Heart right ventricle (tissue), 16 donors: ENCODE measurements at regions of chr5 and their contacts with region 1.

Region 1: DNA sequence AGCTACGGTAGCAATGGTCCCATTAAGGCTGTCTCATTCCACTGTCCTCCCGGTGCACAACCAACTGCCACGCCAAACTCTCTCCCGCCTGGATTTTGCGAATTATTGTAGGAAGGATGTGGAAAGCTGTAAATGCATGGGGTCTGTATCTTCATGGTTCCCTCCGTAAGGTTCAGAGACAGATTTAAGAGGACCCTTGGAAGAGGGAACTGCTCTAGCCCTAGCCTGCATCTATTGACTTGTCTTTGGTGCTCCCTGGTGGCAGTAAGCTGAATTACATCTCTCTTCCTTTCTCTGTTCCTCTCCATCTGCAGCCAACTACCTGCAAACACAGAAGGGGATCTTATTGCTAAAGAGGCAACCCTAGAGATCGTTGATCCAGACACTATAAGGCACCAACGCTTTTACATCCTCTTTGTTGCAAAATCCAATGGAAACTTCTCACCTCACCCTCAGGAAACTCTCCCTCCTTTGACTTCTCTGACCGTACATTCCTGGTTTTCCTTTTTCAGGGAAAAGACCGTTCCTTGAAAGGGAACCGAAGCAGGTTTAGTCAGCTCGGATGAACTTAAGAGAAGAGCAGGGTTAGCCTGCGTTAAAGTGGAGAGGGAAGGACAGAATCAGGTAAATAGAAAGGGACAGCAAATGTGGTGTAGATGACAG is 11.9 kb downstream of the CAPSL start:
- DNase-seq: peak in 1 of 2 donors; percentile 43
- ATAC-seq: peak; percentile 56 to 78 (median 72)
- H3K4me3 ChIP-seq: no peak overlapping the region
- H3K27ac ChIP-seq: no peak overlapping the region
- H3K4me1 ChIP-seq: peaks cover 0 to 18% (median 0%) of the 10 kb centered on the region in 9 donors
- H3K27me3 ChIP-seq: peaks cover 0 to 84% (median 39%) of the 10 kb centered on the region in 7 donors
- CTCF ChIP-seq: peak; percentile 65 to 92 (median 83)

Region 2: DNA sequence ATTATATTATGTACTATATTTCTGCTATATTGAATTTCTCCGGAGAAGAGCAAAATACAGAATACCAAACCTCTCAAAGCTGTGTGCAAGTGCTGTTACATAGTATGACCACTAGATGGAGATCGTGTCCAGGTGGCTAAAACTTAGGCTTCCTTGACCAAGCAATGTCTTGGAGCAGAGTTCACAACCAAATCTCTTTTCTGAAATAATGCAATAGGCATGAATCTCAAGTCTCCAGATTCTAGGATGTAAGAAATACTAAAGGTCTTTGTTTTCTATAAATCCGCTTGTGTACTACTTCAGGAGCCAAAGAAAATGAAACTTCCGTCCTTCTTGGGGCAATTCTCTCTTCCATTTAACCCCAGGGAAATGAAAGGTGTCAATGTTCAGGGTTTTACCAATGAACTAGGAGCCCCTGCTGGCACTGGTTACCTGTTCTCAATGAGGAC is 1451.9 kb before region 1 on chr5:
- intact Hi-C with region 1: loop called in 1 of 10 experiments (anchors 10 kb)
- DNase-seq: no peak
- ATAC-seq: peak in 7 of 8 donors; percentile 47 to 76 (median 63)
- H3K4me3 ChIP-seq: no peak overlapping the region
- H3K27ac ChIP-seq: no peak overlapping the region
- H3K4me1 ChIP-seq: no peaks in the 10 kb centered on the region
- H3K27me3 ChIP-seq: peaks cover 0 to 28% (median 4%) of the 10 kb centered on the region in 7 donors
- CTCF ChIP-seq: peak; percentile 84 to 96 (median 94)

Region 3: GRCh38 chr5:35089334-35090314 is 836.9 kb before region 1 on chr5:
- intact Hi-C with region 1: loop called in 8 of 10 experiments (anchors 5 to 10 kb)
- DNase-seq: peak in 1 of 2 donors; percentile 23
- ATAC-seq: no peak
- H3K4me3 ChIP-seq: no peak overlapping the region
- H3K27ac ChIP-seq: no peak overlapping the region
- H3K4me1 ChIP-seq: no peaks in the 10 kb centered on the region
- H3K27me3 ChIP-seq: no peaks in the 10 kb centered on the region
- CTCF ChIP-seq: peak; percentile 30 to 72 (median 63)

Region 4: DNA sequence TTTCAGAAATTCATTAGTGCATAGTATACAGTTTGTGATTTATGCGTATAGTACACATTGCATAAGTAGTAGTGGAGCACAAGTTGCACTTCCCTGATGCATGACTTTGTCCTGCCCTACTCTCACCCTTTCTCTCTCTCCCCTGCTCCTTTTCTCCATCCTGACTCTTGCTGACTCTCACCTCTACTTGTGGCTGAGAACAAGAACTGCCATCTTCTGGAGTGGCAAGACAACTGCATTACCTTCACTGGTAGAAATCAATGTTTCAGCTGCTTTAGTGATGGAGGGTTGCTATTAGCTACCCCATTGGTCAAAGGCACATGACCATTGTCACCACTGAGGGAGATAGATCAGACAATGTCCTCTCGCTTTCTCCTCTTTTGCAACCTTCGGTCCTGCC is 282.0 kb before region 1 on chr5:
- intact Hi-C with region 1: loop called in 1 of 10 experiments (anchors 10 kb)
- DNase-seq: no peak
- ATAC-seq: no peak
- H3K4me3 ChIP-seq: no peak overlapping the region
- H3K27ac ChIP-seq: no peak overlapping the region
- H3K4me1 ChIP-seq: no peaks in the 10 kb centered on the region
- H3K27me3 ChIP-seq: no peaks in the 10 kb centered on the region
- CTCF ChIP-seq: no peak

Region 5: DNA sequence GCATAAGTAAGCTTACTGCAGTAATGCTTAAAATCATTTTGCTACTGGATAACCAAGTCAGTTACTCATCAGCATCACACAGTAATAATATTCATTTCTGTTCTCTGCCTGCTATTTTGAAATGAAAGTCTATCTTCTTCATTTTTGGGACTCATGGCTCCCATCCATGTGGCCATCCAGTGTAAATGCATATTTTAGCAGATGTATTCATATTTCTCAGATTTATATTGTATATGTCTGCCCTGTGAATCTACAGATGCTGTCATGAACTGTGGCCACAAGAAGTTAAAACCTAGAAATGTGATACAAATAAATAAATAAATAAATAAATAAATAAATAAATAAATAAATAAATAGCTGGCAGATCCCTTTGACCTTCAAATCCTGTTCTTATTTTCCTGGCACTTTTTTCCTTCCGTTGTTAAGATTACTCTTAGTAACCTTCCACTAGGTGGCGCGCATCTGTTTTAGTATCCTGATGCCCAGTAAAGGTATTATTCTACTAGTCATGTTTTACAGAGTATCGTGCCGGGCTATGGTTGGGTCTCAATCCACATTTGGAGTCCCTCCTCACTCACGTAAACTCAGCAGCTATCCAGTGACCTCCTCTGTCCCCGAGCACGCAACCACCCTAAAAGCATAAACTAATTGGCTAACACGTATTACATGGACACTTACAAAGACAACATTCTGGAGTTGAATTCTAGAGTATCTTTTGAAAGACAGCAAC is 149.0 kb before region 1 on chr5:
- intact Hi-C with region 1: loop called (anchors 1 to 5 kb)
- DNase-seq: peak in 1 of 2 donors; percentile 60
- ATAC-seq: peak in 1 of 8 donors; percentile 23
- H3K4me3 ChIP-seq: no peak overlapping the region
- H3K27ac ChIP-seq: no peak overlapping the region
- H3K4me1 ChIP-seq: peaks cover 0 to 28% (median 11%) of the 10 kb centered on the region in 9 donors
- H3K27me3 ChIP-seq: no peaks in the 10 kb centered on the region
- CTCF ChIP-seq: peak; percentile 35 to 69 (median 62)